Kidney (tissue), 22 donors: ENCODE measurements at regions of chr12 and their contacts with region 1.

Region 1: DNA sequence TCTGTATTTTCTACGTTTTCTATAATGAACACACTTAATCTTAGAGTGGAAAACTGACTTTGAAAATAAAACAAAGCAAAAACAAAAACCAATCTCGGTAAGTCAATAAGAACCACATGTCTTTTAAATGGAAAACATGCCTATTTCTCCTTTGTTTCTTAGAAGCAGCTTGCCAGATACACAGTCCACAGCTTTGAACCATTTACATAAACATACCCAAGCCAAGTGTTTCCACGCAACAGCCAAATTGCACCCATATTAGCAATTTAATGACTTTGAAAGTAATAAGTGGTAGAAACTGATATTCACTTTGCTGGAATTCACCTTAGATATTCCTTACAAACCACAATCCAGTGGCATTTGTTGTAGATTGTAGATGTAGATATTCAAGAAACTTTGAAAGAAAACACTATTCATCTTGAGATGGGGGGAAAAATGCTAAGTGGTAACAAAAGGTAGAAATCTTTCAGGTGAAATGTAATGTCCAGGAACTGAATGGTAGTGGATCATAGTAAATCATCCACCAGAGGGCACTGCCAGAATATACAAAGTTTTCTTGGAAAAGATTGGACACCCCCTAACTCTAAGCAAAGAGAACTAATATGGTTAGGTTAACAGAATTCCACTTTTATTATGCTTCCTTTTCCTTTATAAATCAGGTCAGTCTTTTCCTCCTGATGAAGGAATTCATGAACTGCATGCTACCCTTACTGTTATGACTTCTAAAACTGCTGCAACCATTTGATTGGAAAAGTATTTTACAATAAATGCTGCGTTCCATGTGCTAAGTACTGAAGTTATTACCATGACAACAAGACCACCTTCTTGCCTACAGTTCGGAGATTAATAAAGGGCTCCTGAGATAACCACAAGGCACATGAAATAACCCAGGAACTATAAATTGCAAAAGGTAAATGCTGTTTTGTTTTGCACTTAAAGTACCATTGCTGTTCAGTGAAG is 69.8 kb downstream of the RERG start:
- DNase-seq: peak in 2 of 5 donors; percentile 71 to 77
- H3K4me3 ChIP-seq: no peak overlapping the region
- H3K27ac ChIP-seq: peak overlapping the region; percentile 63 to 68
- H3K4me1 ChIP-seq: peaks cover 0 to 16% (median 15%) of the 10 kb centered on the region in 3 donors
- H3K27me3 ChIP-seq: no peaks in the 10 kb centered on the region
- CTCF ChIP-seq: peak; percentile 53

Region 2: DNA sequence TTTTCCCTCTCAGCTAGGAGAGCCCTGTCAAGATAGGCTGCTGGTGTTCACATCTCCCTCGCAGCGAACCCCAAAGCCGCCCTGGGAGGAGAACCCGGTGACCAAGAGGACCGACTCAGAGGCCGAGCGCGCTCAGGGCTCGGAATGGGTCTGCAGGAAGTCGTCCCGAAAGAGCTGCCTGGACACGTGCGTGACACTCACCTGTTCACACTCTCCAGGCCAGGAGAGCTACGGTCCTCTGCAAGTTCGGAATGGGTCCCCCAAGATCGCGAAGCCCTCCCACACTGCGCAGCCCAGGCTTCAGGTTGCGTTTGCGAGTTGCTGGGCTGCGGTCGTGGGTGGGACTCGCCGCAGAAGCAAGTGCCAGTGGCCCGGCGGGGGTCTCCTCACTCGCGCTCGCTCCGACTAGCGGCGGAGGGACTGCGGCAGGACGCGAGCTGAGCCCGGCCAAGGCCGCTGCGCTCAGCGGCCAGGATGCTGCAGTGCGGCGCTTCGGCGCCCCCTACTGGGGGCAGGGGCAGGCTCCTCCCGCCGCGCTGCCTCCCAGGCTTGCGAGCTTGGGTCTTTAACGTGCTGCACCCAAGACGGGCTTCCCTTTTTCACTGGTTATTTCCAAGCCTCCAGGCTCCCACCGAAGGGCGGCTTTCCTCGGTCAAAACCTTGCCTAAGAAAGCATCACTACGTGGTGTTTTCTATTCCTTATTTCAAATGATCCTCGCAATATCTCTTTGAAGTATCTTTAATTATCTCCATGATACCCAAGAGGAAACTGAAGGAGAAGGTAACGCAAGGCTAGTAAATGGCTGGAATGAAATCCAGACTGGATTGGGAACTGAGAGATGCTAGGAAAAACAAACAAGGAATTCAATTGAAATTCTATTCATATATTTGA is 69.8 kb after region 1 on chr12 and contains the start of gene RERG:
- intact Hi-C with region 1: loop called (anchors 5 kb)
- DNase-seq: peak; percentile 91 to 96 (median 93)
- H3K4me3 ChIP-seq: peak within 1 kb of the TSS; percentile 65 to 79 (median 76)
- H3K27ac ChIP-seq: peak within 1 kb of the TSS; percentile 90 to 92
- H3K4me1 ChIP-seq: peaks cover 4 to 12% (median 7%) of the 10 kb centered on the region in 3 donors
- H3K27me3 ChIP-seq: no peaks in the 10 kb centered on the region
- CTCF ChIP-seq: peak; percentile 92
- total RNA-seq, gene RERG: 44.7 TPM